ENCODE measurements at regions of chr3 and their contacts with region 1.

Region 1: DNA sequence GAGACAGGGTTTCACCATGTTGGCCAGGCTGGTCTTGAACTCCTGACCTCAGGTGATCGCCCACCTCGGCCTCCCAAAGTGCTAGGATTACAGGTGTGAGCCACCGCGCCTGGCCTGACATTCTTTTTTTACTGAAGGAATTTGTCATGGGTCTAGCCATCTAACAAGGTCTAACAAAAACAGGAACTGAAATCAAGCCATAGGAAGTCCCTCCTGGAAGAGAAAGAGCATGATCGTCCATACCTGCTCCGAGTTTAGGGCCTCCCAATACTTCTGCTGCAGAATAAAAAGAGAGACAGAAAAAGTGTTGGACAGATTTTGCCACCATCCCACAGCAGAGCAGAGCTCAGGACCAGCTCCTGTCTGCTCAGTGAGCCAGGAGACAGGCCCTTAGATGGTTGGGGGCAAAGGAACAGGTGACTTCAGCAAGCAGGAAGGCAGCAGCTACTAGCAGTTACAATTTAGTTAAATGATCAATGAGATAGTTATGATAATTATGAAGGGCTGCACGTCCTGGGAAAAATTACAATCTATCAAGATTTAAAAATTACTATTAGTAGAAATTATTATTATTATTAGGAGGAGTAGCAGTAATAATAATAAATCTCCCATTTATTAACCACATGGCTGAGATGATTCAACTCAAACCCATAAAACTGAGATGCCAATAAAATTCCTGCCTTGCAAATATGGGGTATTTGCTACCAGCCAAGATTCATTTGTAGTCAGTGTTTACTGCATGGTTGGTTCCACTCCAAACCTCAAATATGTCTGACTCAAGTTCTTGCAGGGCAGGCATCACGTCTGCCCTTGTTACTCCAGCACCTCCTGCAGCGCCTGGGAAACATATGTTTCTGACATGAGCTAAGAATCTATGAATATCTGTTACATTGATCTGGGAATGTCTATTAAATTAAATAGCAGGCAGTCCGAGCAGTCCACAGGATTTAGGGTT is 40.1 kb downstream of the TMEM44 start:
- DNase-seq: no peak
- H3K4me3 Mint-ChIP-seq: no peak overlapping the region
- H3K27ac Mint-ChIP-seq: no peak overlapping the region
- H3K4me1 Mint-ChIP-seq: peaks cover 3% of the 10 kb centered on the region
- H3K27me3 Mint-ChIP-seq: no peaks in the 10 kb centered on the region

Region 2: GRCh38 chr3:194632809-194633348 is 39.8 kb after region 1 on chr3:
- CTCF ChIA-PET with region 1: interaction called, 7 read pairs
- intact Hi-C with region 1: loop called (anchors 1 kb)
- DNase-seq: peak; percentile 24
- H3K4me3 Mint-ChIP-seq: peak overlapping the region; percentile 85
- H3K27ac Mint-ChIP-seq: peak overlapping the region; percentile 53
- H3K4me1 Mint-ChIP-seq: peaks cover 6% of the 10 kb centered on the region
- H3K27me3 Mint-ChIP-seq: no peaks in the 10 kb centered on the region

Region 3: DNA sequence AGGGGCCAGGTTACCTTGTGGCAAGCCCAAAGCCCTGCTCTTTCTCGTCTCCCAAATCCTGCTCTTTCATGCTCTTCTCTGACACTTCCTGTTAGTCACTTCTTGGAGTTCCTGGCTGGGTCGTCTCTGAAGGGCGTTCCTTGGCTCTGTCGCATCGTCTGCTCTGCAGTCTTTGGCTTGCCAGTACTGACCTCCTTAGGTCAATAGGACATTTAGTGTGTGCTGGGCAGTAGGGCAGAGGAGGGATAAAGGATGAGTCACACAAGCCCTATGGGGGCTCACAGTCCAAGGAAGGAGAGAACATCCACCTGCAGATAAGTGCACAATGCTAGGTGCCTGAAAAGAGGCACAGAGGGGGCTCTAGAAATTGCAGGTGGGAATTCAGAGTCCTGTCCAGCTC is 180.1 kb after region 1 on chr3:
- CTCF ChIA-PET with region 1: no interaction called
- intact Hi-C with region 1: no loop called
- DNase-seq: no peak
- H3K4me3 Mint-ChIP-seq: no peak overlapping the region
- H3K27ac Mint-ChIP-seq: no peak overlapping the region
- H3K4me1 Mint-ChIP-seq: peaks cover 9% of the 10 kb centered on the region
- H3K27me3 Mint-ChIP-seq: peaks cover 2% of the 10 kb centered on the region